ENCODE measurements at regions of chr1 and their contacts with region 1.

Region 1: DNA sequence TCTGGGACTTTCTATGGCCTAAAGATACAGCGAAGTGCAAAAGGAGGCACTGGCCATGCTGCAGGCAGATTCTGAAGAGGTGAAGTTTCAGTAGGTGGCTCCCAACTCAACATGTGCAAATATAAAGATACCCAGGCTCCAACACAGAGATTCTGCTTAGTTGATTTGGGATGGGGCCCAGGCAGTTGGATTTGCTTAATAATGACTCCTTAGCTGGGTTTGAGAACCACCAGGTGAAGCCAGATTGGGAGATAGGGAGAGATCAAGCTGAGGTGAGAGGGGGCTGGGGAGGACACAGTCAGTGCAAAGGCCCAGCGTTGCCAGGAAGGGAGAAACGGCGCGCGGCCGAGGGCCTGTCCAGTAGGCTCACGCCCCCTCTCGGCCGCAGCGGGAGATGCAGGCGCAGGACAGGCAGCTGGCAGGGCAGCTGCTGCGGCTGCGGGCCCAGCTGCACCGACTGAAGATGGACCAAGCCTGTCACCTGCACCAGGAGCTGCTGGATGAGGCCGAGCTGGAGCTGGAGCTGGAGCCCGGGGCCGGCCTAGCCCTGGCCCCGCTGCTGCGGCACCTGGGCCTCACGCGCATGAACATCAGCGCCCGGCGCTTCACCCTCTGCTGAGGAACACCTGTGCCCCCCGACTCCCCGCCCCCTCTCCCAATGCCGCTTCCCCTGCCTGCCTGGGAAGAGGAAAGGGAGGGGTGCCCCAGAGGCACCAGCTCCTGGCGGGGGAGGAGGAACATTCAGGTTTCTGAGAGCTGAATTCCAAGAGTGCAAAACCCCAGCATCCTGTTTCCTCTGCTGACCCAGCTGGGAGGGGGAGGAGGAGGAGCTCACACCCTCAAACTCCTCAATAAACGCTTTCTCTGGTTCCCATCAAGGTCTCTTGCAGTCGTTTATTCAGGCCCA is 1.2 kb downstream of the FAM167B start:
- DNase-seq: peak; percentile 91
- H3K4me3 ChIP-seq: peak overlapping the region in 1 of 2 experiments; percentile 47; a peak in 1 of 4 replicates
- H3K27ac ChIP-seq: no peak overlapping the region
- H3K4me1 ChIP-seq: peaks cover 2 to 10% of the 10 kb centered on the region in 2 experiments; a peak in 3 of 4 replicates
- H3K27me3 ChIP-seq: no peaks in the 10 kb centered on the region
- CTCF ChIP-seq: peak; percentile 74
- EP300 ChIP-seq: no peak
- RAD21 ChIP-seq: peak; percentile 67

Region 2: DNA sequence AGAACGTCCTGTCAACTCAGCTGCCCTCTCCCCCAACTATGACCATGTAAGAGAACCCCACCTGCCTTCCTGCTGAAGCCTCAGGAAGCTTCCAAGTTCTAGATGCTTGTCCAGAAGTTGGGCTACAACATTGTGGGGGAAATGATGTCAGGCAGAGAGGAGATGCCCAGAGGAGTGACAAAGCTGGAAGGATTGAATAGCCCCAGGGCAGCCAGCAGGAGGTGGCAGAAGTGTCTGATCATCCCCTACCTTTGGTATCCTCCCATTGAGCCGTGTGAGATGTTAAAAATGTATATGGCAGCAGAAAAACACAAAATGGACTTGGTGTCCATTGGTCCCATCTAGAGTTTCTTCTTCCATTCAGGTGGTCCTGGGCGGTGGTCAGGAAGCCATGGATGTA is 19.5 kb before region 1 on chr1:
- CTCF ChIA-PET with region 1: interaction called, 11 read pairs
- POLR2A ChIA-PET with region 1: interaction called, 3 read pairs
- DNase-seq: no peak
- H3K4me3 ChIP-seq: no peak overlapping the region
- H3K27ac ChIP-seq: no peak overlapping the region
- H3K4me1 ChIP-seq: peaks cover under 1 to 3% of the 10 kb centered on the region in 2 experiments; a peak in 3 of 4 replicates
- H3K27me3 ChIP-seq: no peaks in the 10 kb centered on the region
- CTCF ChIP-seq: no peak
- EP300 ChIP-seq: no peak
- RAD21 ChIP-seq: no peak

Measured in SK-N-SH (cell line).